GM12878 (cell line): ENCODE measurements at regions of chrX and their contacts with region 1.

Region 1: DNA sequence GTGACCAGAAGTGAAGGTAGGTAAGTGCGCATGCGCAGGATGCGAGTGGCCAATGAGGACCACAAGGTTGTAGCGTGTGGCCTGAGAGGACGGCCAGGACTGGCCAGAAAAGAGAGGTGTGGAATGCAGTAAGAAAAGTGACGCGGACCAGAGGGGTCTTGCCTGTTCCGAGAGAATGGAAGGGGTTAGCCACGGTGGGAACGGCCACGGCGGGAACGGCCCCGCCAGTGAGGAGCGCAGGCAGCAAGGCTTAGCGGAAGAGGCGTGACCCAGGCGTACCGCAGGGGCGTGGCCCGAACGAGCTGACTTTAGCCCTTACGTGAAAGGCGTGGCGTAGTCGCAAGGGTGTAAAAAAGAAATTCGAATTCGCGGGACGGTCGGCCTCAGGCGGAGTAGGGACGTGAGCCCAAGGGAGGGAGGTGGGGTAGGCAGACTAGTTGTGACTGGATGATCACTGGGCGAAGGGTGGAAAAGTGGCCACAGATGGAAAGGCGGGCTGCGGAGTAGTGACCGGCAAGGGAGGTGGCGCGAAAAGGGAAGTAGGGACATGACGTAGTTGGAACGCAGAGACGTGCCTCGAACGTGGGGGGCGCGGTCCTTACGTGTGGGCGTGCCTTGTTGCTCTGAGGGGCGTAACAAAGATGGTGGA is 10.4 kb upstream of the CLTRN start:
- DNase-seq: peak; percentile 94
- ATAC-seq: peak; percentile 89
- H3K4me3 ChIP-seq: peak overlapping the region; percentile 81
- H3K27ac ChIP-seq: peak overlapping the region; percentile 88
- H3K4me1 ChIP-seq: peaks cover 14% of the 10 kb centered on the region
- H3K27me3 ChIP-seq: no peaks in the 10 kb centered on the region
- CTCF ChIP-seq: no peak
- EP300 ChIP-seq: no peak
- POLR2A ChIP-seq: peak; percentile 83
- RAD21 ChIP-seq: no peak

Region 2: GRCh38 chrX:15567886-15568616 is 106.9 kb before region 1 on chrX:
- CTCF ChIA-PET with region 1: no interaction called
- POLR2A ChIA-PET with region 1: no interaction called
- RAD21 ChIA-PET with region 1: no interaction called
- SMC1A ChIA-PET with region 1: no interaction called
- in situ Hi-C with region 1: no loop called
- intact Hi-C with region 1: no loop called
- DNase-seq: no peak
- ATAC-seq: no peak
- H3K4me3 ChIP-seq: no peak overlapping the region
- H3K27ac ChIP-seq: no peak overlapping the region
- H3K4me1 ChIP-seq: no peaks in the 10 kb centered on the region
- H3K27me3 ChIP-seq: peaks cover 0 to 4% of the 10 kb centered on the region in 2 experiments; a peak in 1 of 4 replicates
- CTCF ChIP-seq: 0 out of 6 replicates have a peak, but pooled peaks of 2 of the 3 experiments have one; percentile 4 to 5
- EP300 ChIP-seq: no peak
- POLR2A ChIP-seq: no peak
- RAD21 ChIP-seq: peak; percentile 20; the same call in 1 of the 2 replicates

Region 3: GRCh38 chrX:15789979-15790768 is 115.2 kb after region 1 on chrX and contains the start of gene ZRSR2:
- CTCF ChIA-PET with region 1: no interaction called
- POLR2A ChIA-PET with region 1: interaction called, 3 read pairs
- RAD21 ChIA-PET with region 1: no interaction called
- SMC1A ChIA-PET with region 1: no interaction called
- in situ Hi-C with region 1: no loop called
- intact Hi-C with region 1: loop called (anchors 5 kb)
- DNase-seq: peak; percentile 58
- ATAC-seq: peak; percentile 96
- H3K4me3 ChIP-seq: peak within 1 kb of the TSS; percentile 71
- H3K27ac ChIP-seq: peak within 1 kb of the TSS; percentile 68
- H3K4me1 ChIP-seq: no peaks in the 10 kb centered on the region
- H3K27me3 ChIP-seq: no peaks in the 10 kb centered on the region
- CTCF ChIP-seq: no peak
- EP300 ChIP-seq: no peak
- POLR2A ChIP-seq: peak; percentile 88
- RAD21 ChIP-seq: no peak
- polyA plus RNA-seq, gene ZRSR2: 10.5 to 14.0 TPM